Activated B cell treated with CpG ODN at 0.5 μM for 24 hours (primary cell): ENCODE measurements at regions of chr1 and their contacts with region 1.

Region 1: GRCh38 chr1:39230261-39231190 is 26.0 kb downstream of the MACF1 start:
- DNase-seq: peak; percentile 24
- ATAC-seq: peak; percentile 86
- H3K4me3 Mint-ChIP-seq: peak overlapping the region; percentile 36
- H3K27ac Mint-ChIP-seq: peak overlapping the region; percentile 85
- H3K4me1 Mint-ChIP-seq: peaks cover 47% of the 10 kb centered on the region
- H3K27me3 Mint-ChIP-seq: no peaks in the 10 kb centered on the region
- CTCF ChIP-seq: no peak

Region 2: DNA sequence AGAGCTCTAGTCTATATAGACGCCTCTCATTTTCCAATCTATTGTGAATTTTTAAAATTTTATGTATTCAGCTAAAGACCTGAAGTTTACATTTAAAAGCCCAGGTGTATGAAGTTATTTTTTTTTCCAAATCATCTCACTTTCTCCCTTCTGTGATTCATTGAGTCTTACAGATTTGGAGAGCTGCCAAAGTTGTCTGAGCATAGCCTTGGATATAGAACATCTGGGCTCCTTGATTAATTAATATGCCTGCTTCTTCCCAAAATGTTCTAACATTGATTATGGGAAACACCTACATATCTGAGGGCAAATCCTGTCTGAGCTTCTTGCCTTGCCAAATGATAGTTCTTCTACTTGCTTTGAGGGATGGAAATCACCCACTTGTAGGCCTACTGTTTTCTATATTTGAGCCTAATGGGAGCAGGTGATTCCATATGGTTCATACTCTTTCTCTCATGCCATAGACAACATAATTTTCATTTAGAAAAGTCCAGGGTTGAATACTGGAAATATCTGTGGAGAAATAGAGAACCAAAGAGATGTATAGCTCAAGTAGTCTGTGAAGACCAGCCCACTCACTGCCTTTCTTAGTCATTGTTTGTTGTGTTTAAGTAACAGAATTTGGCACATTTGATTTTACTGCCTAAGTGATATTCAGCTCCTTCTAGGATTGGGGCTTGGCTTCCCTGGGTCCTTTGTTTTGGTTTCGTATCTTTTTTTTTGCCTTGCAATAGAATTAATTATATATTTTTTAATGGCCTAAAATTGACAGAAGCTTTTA is 20.1 kb after region 1 on chr1:
- CTCF ChIA-PET with region 1: no interaction called
- POLR2A ChIA-PET with region 1: interaction called, 6 read pairs
- intact Hi-C with region 1: loop called (anchors 2 kb)
- DNase-seq: no peak
- ATAC-seq: no peak
- H3K4me3 Mint-ChIP-seq: no peak overlapping the region
- H3K27ac Mint-ChIP-seq: no peak overlapping the region
- H3K4me1 Mint-ChIP-seq: no peaks in the 10 kb centered on the region
- H3K27me3 Mint-ChIP-seq: no peaks in the 10 kb centered on the region
- CTCF ChIP-seq: no peak

Region 3: GRCh38 chr1:39398278-39399021 is 167.9 kb after region 1 on chr1:
- CTCF ChIA-PET with region 1: no interaction called
- POLR2A ChIA-PET with region 1: no interaction called
- intact Hi-C with region 1: no loop called
- DNase-seq: no peak
- ATAC-seq: peak; percentile 75
- H3K4me3 Mint-ChIP-seq: peak overlapping the region; percentile 24
- H3K27ac Mint-ChIP-seq: peak overlapping the region; percentile 32
- H3K4me1 Mint-ChIP-seq: peaks cover 52% of the 10 kb centered on the region
- H3K27me3 Mint-ChIP-seq: no peaks in the 10 kb centered on the region
- CTCF ChIP-seq: no peak